CD8-positive, alpha-beta T cell (primary cell): ENCODE measurements at regions of chr12 and their contacts with region 1.

Region 1: GRCh38 chr12:48903982-48904411 is 21.3 kb downstream of the FKBP11 start:
- DNase-seq: peak; percentile 68 to 93 (median 87)
- ATAC-seq: peak; percentile 99
- H3K4me3 ChIP-seq: peak overlapping the region; percentile 13 to 27
- H3K4me3 Mint-ChIP-seq: peak overlapping the region; percentile 79
- H3K27ac ChIP-seq: no peak overlapping the region
- H3K27ac Mint-ChIP-seq: no peak overlapping the region
- H3K4me1 ChIP-seq: peaks cover 4% of the 10 kb centered on the region
- H3K4me1 Mint-ChIP-seq: peaks cover 11% of the 10 kb centered on the region
- H3K27me3 ChIP-seq: no peaks in the 10 kb centered on the region
- H3K27me3 Mint-ChIP-seq: no peaks in the 10 kb centered on the region
- CTCF ChIP-seq: peak; percentile 79

Region 2: GRCh38 chr12:48527891-48528675 is 375.9 kb before region 1 on chr12:
- CTCF ChIA-PET with region 1: no interaction called
- POLR2A ChIA-PET with region 1: no interaction called
- intact Hi-C with region 1: no loop called
- DNase-seq: no peak
- ATAC-seq: no peak
- H3K4me3 ChIP-seq: no peak overlapping the region
- H3K4me3 Mint-ChIP-seq: no peak overlapping the region
- H3K27ac ChIP-seq: no peak overlapping the region
- H3K27ac Mint-ChIP-seq: no peak overlapping the region
- H3K4me1 ChIP-seq: peaks cover 13% of the 10 kb centered on the region
- H3K4me1 Mint-ChIP-seq: peaks cover 20% of the 10 kb centered on the region
- H3K27me3 ChIP-seq: peaks cover 0 to 2% of the 10 kb centered on the region in 2 experiments
- H3K27me3 Mint-ChIP-seq: peaks cover 4% of the 10 kb centered on the region
- CTCF ChIP-seq: no peak

Region 3: GRCh38 chr12:48917857-48918537 is 14.0 kb after region 1 on chr12:
- CTCF ChIA-PET with region 1: interaction called, 139 read pairs
- POLR2A ChIA-PET with region 1: interaction called, 5 read pairs
- intact Hi-C with region 1: no loop called
- DNase-seq: peak in 8 of 9 experiments; percentile 44 to 78 (median 60)
- ATAC-seq: peak; percentile 90
- H3K4me3 ChIP-seq: peak overlapping the region; percentile 48 to 55
- H3K4me3 Mint-ChIP-seq: peak overlapping the region; percentile 90
- H3K27ac ChIP-seq: peak overlapping the region; percentile 34 to 75
- H3K27ac Mint-ChIP-seq: peak overlapping the region; percentile 93
- H3K4me1 ChIP-seq: peaks cover 41% of the 10 kb centered on the region
- H3K4me1 Mint-ChIP-seq: peaks cover 42% of the 10 kb centered on the region
- H3K27me3 ChIP-seq: no peaks in the 10 kb centered on the region
- H3K27me3 Mint-ChIP-seq: no peaks in the 10 kb centered on the region
- CTCF ChIP-seq: no peak

Region 4: GRCh38 chr12:48977315-48978281 is 73.6 kb after region 1 on chr12:
- CTCF ChIA-PET with region 1: interaction called, 13 read pairs
- POLR2A ChIA-PET with region 1: interaction called, 3 read pairs
- intact Hi-C with region 1: no loop called
- DNase-seq: peak; percentile 59 to 92 (median 84)
- ATAC-seq: peak; percentile 55
- H3K4me3 ChIP-seq: peak overlapping the region; percentile 60 to 77
- H3K4me3 Mint-ChIP-seq: peak overlapping the region; percentile 63
- H3K27ac ChIP-seq: no peak overlapping the region
- H3K27ac Mint-ChIP-seq: peak overlapping the region; percentile 76
- H3K4me1 ChIP-seq: peaks cover 44% of the 10 kb centered on the region
- H3K4me1 Mint-ChIP-seq: peaks cover 46% of the 10 kb centered on the region
- H3K27me3 ChIP-seq: peaks cover 14% of the 10 kb centered on the region in 2 experiments
- H3K27me3 Mint-ChIP-seq: peaks cover 28% of the 10 kb centered on the region
- CTCF ChIP-seq: peak; percentile 92

Region 5: DNA sequence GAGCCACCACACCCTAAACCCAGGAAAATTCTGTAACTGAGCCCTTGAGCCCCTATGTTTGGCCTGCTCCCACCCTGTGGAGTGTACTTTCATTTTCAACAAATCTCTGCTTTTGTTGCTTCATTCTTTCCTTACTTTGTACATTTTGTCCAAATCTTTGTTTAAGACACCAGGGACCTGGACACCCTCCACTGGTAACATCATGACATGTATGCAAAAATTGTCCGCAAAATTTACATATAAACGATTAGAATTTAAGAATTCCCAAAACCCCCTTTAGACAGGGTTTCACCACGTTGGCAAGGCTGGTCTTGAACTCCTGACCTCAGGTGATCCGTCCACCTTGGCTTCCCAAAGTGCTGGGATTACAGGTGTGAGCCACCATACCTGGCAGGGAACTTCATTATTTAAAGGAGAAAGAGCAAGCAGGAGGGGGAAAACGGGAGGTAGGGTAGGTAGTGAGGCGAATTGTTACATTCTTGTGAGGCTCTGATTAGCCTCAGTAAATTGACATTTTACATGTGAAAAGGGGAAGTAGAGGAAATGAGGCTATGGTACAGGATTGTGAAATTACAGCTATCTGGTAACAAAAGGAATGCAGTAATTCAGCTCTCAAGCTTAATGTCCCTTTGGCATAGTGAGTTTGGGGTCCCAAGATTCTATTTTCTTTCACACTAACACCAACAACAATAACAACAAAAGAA is 257.2 kb after region 1 on chr12:
- CTCF ChIA-PET with region 1: no interaction called
- POLR2A ChIA-PET with region 1: no interaction called
- intact Hi-C with region 1: no loop called
- DNase-seq: no peak
- ATAC-seq: no peak
- H3K4me3 ChIP-seq: no peak overlapping the region
- H3K4me3 Mint-ChIP-seq: no peak overlapping the region
- H3K27ac ChIP-seq: no peak overlapping the region
- H3K27ac Mint-ChIP-seq: no peak overlapping the region
- H3K4me1 ChIP-seq: no peaks in the 10 kb centered on the region
- H3K4me1 Mint-ChIP-seq: no peaks in the 10 kb centered on the region
- H3K27me3 ChIP-seq: no peaks in the 10 kb centered on the region
- H3K27me3 Mint-ChIP-seq: no peaks in the 10 kb centered on the region
- CTCF ChIP-seq: no peak